Naive thymus-derived CD8-positive, alpha-beta T cell (primary cell): ENCODE measurements at regions of chr5 and their contacts with region 1.

Region 1: GRCh38 chr5:122774861-122775549 is at the start of gene SNX2:
- DNase-seq: peak; percentile 83 to 92 (median 90)
- ATAC-seq: peak; percentile 86 to 89
- H3K4me3 Mint-ChIP-seq: peak within 1 kb of the TSS; percentile 93 to 98 (median 96)
- H3K27ac Mint-ChIP-seq: peak within 1 kb of the TSS; percentile 94 to 97 (median 96)
- H3K4me1 Mint-ChIP-seq: peaks cover 17 to 52% (median 38%) of the 10 kb centered on the region in 4 donors
- H3K27me3 Mint-ChIP-seq: peaks cover 0 to 5% (median 1%) of the 10 kb centered on the region in 5 donors
- polyA plus RNA-seq, gene SNX2: 47.6 to 76.5 (median 58.0) TPM

Region 2: GRCh38 chr5:122845229-122846050 is 70.4 kb after region 1 on chr5 and contains the start of gene SNX24:
- POLR2A ChIA-PET with region 1: interaction called, 12 read pairs
- DNase-seq: peak; percentile 45 to 76 (median 60)
- ATAC-seq: peak; percentile 83 to 89
- H3K4me3 Mint-ChIP-seq: peak within 1 kb of the TSS; percentile 84 to 93 (median 91)
- H3K27ac Mint-ChIP-seq: peak within 1 kb of the TSS; percentile 57 to 93 (median 82)
- H3K4me1 Mint-ChIP-seq: peaks cover 9 to 38% (median 25%) of the 10 kb centered on the region in 4 donors
- H3K27me3 Mint-ChIP-seq: peaks cover 1 to 10% (median 6%) of the 10 kb centered on the region in 5 donors
- polyA plus RNA-seq, gene SNX24: 0.42 to 1.5 (median 0.79) TPM